Activated CD4-positive, alpha-beta memory T cell treated with anti-CD3 and anti-CD28 coated beads, Interleukin-2, amount 10 ng/mL, durations not matched to agents 7 days and 5 days (primary cell): ENCODE measurements at regions of chr22 and their contacts with region 1.

Region 1: DNA sequence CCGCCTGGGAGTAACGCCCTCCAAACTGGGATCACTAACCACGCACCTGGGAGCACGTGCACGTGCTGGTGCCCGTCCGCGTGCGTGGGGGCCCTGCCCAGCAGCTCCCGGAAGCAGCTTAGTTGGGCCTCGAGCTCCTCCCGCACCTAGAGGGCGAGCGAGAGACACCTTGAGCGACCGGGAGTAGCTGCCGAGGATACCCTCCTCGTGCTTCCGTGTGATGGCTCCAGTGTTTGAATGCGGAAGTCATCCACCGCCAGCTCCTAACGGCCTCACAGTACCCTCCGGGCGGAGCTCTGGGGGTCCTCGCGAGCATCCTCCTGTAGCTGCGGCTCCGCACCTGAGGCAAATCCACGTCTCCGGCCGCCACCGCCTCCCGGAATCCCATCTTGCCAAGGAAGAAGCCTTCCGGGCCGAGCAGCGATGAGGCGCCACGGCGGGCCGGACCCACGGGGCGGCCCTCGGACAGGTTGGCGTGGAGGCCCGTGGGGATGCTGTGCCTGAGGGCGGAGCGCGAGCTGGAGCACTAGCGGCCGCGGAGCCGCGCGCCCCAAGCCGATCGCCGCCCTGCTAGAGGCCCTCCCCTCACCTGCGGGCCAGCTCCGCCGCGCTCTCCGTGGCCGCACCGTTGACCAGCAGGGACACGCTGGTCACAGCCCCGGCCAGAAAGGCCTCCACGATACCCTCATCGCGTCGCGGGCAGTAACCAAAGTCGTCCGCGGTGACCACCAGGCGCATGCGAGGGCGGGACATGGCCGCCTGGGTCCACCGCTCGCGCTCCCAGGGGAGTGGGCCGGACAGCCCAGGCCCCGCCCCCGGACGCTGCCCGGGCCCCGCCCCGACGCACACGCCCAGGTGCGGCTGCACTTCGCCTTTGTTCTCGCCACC is at the start of gene YDJC:
- DNase-seq: peak; percentile 95
- H3K4me3 Mint-ChIP-seq: peak within 1 kb of the TSS; percentile 87
- H3K27ac Mint-ChIP-seq: peak within 1 kb of the TSS; percentile 88
- H3K4me1 Mint-ChIP-seq: peaks cover 46% of the 10 kb centered on the region
- H3K27me3 Mint-ChIP-seq: no peaks in the 10 kb centered on the region
- total RNA-seq, gene YDJC: 37.1 to 38.0 TPM

Region 2: GRCh38 chr22:21567456-21568346 is 61.8 kb before region 1 on chr22 and contains the start of gene UBE2L3:
- CTCF ChIA-PET with region 1: interaction called, 19 read pairs
- POLR2A ChIA-PET with region 1: interaction called, 38 read pairs
- DNase-seq: peak; percentile 88
- H3K4me3 Mint-ChIP-seq: peak within 1 kb of the TSS; percentile 92
- H3K27ac Mint-ChIP-seq: peak within 1 kb of the TSS; percentile 90
- H3K4me1 Mint-ChIP-seq: peaks cover 45% of the 10 kb centered on the region
- H3K27me3 Mint-ChIP-seq: peaks cover 2% of the 10 kb centered on the region
- total RNA-seq, gene UBE2L3: 54.3 to 57.4 TPM

Region 3: DNA sequence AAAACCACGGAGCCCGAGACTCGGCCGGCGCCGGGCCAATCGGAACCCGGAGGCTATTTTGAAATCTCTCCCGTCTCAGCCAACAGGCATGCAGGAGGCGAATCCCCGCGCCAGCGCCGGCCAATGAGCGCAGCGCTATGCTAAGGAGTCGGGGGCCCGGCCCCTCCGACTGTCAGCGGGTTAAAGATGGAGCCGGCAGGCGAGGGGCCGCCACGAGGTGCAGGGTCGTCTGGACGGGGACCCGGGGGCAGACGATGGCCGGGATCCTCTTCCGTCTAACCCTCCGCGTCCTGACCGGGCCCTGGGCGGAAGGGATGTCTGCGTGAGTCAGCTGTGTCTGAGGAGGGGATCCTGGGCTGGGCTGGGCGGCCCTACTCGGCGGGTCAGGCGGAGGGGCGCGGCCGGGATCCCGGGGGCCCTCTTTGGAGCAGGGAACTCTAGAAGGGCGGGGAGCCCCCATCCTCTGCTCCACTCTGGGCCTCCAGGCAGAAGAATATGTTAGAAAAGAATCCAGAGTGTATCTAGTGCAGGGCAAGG is 22.6 kb after region 1 on chr22:
- CTCF ChIA-PET with region 1: interaction called, 289 read pairs
- POLR2A ChIA-PET with region 1: interaction called, 40 read pairs
- DNase-seq: peak; percentile 92
- H3K4me3 Mint-ChIP-seq: peak overlapping the region; percentile 81
- H3K27ac Mint-ChIP-seq: peak overlapping the region; percentile 84
- H3K4me1 Mint-ChIP-seq: peaks cover 35% of the 10 kb centered on the region
- H3K27me3 Mint-ChIP-seq: no peaks in the 10 kb centered on the region

Region 4: DNA sequence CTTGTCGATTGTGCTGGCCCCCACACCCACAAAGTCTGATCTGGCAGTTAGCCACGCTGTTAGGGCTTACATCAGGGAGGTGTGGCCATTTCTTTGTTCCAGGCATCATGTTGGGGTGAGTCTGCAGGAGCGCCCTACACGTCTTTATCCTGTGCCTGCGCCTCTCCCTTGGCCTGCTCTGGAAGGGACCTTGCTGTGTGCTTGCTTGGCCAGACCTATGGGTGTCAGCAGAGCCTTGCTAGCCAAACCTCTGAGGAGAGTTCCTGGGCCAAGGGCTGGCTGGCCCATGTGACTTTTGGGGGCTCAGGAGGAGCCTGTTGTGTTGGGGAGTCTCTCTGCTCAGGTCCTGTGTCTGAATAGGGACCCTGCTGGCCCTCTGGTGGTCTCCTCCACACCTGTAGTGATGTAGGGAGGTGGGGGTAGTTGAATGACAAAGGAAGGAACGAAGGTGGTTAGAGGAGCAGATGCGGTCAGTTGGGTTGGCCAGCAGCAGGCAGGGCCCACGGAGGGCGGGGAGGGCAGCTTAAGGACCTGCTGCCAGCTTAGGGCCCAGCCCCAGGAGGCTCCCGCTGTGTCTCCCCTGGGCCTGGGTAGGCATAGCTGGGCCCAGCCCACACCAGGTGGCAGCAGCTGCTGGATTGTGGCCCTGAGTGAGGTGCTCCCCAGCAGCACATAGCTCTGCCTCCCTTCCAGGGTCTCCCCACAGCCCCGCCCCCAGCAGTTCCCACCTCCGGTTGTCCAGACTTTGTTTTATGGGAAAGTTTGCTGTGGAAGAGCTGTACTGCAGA is 44.2 kb after region 1 on chr22:
- CTCF ChIA-PET with region 1: no interaction called
- POLR2A ChIA-PET with region 1: no interaction called
- DNase-seq: no peak
- H3K4me3 Mint-ChIP-seq: no peak overlapping the region
- H3K27ac Mint-ChIP-seq: no peak overlapping the region
- H3K4me1 Mint-ChIP-seq: peaks cover 11% of the 10 kb centered on the region
- H3K27me3 Mint-ChIP-seq: no peaks in the 10 kb centered on the region

Region 5: DNA sequence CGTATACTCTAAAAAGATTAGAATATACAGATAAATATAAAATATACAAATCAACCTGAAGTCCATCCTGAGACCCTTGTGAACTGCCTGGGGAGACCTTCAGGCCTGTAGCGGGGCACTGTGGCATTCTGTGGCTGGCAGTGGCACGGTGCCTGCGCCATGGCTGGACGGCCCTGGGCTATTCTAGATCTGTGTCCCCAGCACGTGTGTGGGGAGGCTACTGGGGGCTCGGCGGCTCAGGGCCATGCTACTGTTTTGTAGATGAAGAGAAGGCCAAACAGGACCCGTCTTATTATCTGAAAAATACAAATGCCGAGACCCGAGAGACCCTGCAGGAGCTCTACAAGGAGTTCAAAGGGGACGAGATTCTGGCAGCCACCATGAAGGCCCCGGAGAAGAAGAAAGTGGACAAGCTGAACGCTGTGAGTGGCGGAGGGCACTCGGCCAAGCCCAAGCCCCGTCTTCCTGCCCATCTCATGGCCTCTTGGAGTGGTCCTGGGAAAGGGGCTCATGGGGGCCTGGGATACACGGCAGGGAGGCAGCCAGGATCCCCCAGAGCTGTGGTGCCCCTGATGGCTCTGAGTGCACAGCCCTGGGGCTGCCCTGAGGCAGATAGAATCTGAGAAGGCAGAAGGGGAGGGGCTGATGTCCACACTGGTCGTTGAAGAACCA is 55.1 kb after region 1 on chr22:
- CTCF ChIA-PET with region 1: no interaction called
- POLR2A ChIA-PET with region 1: no interaction called
- DNase-seq: no peak
- H3K4me3 Mint-ChIP-seq: no peak overlapping the region
- H3K27ac Mint-ChIP-seq: no peak overlapping the region
- H3K4me1 Mint-ChIP-seq: peaks cover 5% of the 10 kb centered on the region
- H3K27me3 Mint-ChIP-seq: no peaks in the 10 kb centered on the region

Region 6: GRCh38 chr22:21889251-21889990 is 259.9 kb after region 1 on chr22:
- CTCF ChIA-PET with region 1: no interaction called
- POLR2A ChIA-PET with region 1: no interaction called
- DNase-seq: no peak
- H3K4me3 Mint-ChIP-seq: no peak overlapping the region
- H3K27ac Mint-ChIP-seq: no peak overlapping the region
- H3K4me1 Mint-ChIP-seq: no peaks in the 10 kb centered on the region
- H3K27me3 Mint-ChIP-seq: peaks cover 8% of the 10 kb centered on the region